GM12878 (cell line): ENCODE measurements at regions of chr19 and their contacts with region 1.

Region 1: GRCh38 chr19:44909775-44910174 is 4.2 kb downstream of the APOE start:
- DNase-seq: no peak
- ATAC-seq: no peak
- H3K4me3 ChIP-seq: no peak overlapping the region
- H3K27ac ChIP-seq: no peak overlapping the region
- H3K4me1 ChIP-seq: 0 out of 2 replicates have a peak, but pooled peaks cover 3% of the 10 kb centered on the region
- H3K27me3 ChIP-seq: no peaks in the 10 kb centered on the region; a peak in 1 of 4 replicates
- CTCF ChIP-seq: no peak
- EP300 ChIP-seq: no peak
- POLR2A ChIP-seq: no peak
- RAD21 ChIP-seq: no peak

Region 2: GRCh38 chr19:44954824-44955586 is 45.2 kb after region 1 on chr19 and contains the start of gene CLPTM1:
- CTCF ChIA-PET with region 1: interaction called, 37 read pairs
- POLR2A ChIA-PET with region 1: interaction called, 3 read pairs
- RAD21 ChIA-PET with region 1: interaction called, 3 read pairs
- SMC1A ChIA-PET with region 1: interaction called, 11 read pairs
- in situ Hi-C with region 1: loop called (anchors 10 kb)
- intact Hi-C with region 1: no loop called
- DNase-seq: peak; percentile 92
- ATAC-seq: peak; percentile 95
- H3K4me3 ChIP-seq: peak within 1 kb of the TSS; percentile 80
- H3K27ac ChIP-seq: peak within 1 kb of the TSS; percentile 100
- H3K4me1 ChIP-seq: peaks cover 10% of the 10 kb centered on the region
- H3K27me3 ChIP-seq: no peaks in the 10 kb centered on the region
- CTCF ChIP-seq: no peak
- EP300 ChIP-seq: no peak
- POLR2A ChIP-seq: peak; percentile 85
- RAD21 ChIP-seq: no peak
- polyA plus RNA-seq, gene CLPTM1: 0.42 to 2.3 TPM

Region 3: GRCh38 chr19:45047188-45047797 is 137.5 kb after region 1 on chr19:
- CTCF ChIA-PET with region 1: no interaction called
- POLR2A ChIA-PET with region 1: no interaction called
- RAD21 ChIA-PET with region 1: no interaction called
- SMC1A ChIA-PET with region 1: no interaction called
- in situ Hi-C with region 1: no loop called
- intact Hi-C with region 1: no loop called
- DNase-seq: peak; percentile 34
- ATAC-seq: peak; percentile 93
- H3K4me3 ChIP-seq: peak overlapping the region; percentile 48
- H3K27ac ChIP-seq: peak overlapping the region; percentile 67
- H3K4me1 ChIP-seq: peaks cover 36% of the 10 kb centered on the region
- H3K27me3 ChIP-seq: no peaks in the 10 kb centered on the region
- CTCF ChIP-seq: peak in 1 of 3 experiments; percentile 44; a peak in 1 of 6 replicates
- EP300 ChIP-seq: no peak
- POLR2A ChIP-seq: no peak
- RAD21 ChIP-seq: no peak; the same call in 1 of the 2 replicates